Left cardiac atrium (tissue), 4 donors: ENCODE measurements at regions of chr12 and their contacts with region 1.

Region 1: DNA sequence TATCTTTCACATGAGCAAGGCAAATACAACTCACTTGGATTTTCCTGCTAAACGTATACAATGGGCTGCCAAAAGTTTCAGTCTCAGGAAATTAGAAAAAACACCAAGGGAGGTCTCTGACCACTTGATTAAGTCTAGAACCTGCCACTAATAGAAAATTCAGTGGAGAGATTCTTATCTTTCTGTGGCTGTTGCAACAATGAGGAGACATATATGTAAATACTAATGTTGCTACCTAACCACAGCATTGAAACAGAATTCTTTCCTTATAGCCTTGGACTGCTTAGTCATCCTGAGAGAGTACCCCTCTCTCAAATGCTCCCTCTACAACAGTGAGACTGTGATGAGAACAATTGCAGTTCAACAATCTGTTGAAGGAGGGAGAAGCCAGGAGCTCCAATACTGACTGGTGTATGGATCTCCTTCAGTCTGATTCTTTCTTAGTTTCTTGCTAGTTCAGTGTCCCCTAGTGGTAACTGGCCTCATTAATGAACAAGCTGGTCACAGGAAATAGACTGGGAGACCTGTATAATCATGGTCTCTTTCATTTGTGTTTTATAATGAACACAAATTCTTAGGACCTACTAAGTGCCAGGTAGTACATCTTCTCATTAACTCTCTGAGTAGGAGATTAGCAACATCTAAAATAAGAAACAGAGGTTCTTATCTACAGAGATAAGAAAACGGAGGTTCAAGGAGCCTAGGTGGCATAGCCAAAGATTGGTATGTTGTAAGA is 164.5 kb downstream of the SLC38A4 start:
- DNase-seq: no peak
- ATAC-seq: peak; percentile 83 to 89

Region 2: GRCh38 chr12:46354111-46354798 is 307.0 kb before region 1 on chr12:
- intact Hi-C with region 1: loop called in 1 of 2 experiments (anchors 5 kb)
- DNase-seq: no peak
- ATAC-seq: no peak

Region 3: GRCh38 chr12:46372544-46373110 is 288.7 kb before region 1 on chr12 and contains the start of gene SLC38A2:
- intact Hi-C with region 1: loop called (anchors 5 to 10 kb)
- DNase-seq: peak; percentile 98
- ATAC-seq: peak; percentile 94 to 96
- total RNA-seq, gene SLC38A2: 122 to 202 TPM

Region 4: DNA sequence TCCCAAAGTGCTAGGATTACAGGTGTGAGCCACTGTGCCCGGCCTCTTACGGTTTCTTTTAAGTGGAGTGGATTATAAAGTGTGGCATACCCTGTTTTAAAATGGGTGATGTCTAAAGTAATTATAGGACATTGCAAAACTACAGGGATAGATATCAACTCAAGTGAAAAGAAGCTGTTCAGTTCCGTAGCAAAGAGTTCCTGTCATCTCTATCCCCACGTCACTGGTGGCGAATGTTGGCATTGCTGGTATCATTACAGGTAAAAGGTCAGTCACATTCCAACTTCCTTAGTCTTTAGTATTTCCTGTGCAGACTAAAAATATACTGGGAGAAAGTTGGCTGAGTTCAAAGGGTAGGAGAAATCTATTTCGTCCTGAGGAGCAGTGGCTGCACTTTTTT is 193.1 kb before region 1 on chr12:
- intact Hi-C with region 1: loop called in 1 of 2 experiments (anchors 5 kb)
- DNase-seq: peak; percentile 48
- ATAC-seq: peak; percentile 12 to 82

Region 5: DNA sequence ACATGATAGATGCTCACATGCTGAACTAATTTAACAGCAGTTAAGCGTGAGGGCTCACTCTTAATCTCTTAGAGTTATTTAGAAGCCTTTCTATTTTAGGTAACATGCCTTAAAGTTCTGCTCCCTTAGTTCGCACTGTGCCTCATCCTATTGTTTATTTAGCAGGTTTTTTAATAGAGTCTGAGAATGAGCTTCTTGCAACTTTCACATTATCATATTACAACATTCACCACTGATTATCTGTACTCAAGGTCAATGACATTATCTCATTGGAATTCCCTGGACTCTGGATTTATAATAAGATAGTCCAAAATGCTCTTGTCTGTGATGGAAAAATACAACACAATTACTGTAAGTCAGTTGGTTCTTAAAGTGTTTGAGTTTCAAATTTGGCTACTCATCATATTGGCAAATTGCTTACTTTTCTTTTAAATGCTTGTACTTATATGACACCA is 105.1 kb before region 1 on chr12:
- intact Hi-C with region 1: loop called in 1 of 2 experiments (anchors 2 kb)
- DNase-seq: no peak
- ATAC-seq: peak; percentile 82 to 87

Region 6: DNA sequence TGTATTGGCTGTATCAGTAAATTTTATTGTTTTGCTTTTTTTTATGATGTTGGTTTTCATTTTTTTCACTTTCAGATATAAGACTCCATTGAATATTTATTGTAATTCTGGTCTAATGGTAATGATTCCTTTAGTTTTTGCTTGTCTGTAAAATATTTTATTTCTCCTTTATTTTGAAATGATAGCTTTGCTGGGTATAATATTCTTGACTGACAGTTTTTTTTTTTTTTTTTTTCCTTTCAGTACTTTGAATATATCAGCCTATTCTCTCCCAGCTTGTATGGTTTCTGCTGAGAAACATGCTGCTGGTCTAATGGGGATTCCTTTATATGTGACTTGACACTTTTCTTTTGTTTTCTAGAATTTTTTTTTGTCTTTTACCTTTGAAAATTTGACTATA is 93.6 kb before region 1 on chr12:
- intact Hi-C with region 1: no loop called
- DNase-seq: no peak
- ATAC-seq: no peak

Region 7: GRCh38 chr12:46702581-46703344 is 41.5 kb after region 1 on chr12:
- intact Hi-C with region 1: no loop called
- DNase-seq: no peak
- ATAC-seq: peak in 1 of 2 donors; percentile 84

Region 8: GRCh38 chr12:46794593-46795190 is 133.4 kb after region 1 on chr12:
- intact Hi-C with region 1: no loop called
- DNase-seq: no peak
- ATAC-seq: no peak